ENCODE measurements at regions of chr9 and their contacts with region 1.

Region 1: DNA sequence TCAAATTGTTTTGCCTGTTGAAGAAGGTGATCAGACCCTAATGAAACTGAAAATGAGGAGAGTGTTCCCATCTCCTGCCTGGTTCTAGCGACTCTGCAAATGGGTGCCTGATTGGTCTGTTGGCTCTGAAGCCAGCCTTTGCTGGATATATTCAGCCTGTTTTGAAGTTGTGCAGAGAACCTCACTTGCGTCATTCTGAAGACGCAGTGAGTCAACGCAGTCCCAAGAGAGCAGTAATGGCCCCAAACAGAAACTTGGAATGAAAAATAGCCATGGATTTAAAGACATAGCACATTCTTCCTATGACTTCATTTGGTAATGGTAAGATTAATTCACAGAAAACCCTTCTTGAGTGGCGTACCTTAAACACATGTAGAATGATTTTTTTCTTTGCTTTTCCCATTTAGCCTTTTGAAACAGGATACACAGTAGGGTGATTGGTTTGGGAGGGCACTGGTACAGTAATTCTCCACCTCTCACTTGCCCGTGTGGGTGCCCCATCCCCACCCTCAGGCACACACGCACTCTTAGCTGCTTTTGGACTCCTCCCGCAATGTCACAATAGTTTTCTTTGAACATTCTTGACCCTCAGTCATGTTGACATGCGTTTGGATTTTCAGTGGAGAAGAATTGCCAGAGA is 54.1 kb upstream of the ABL1 start:
- DNase-seq: peak in 1 of 2 donors; percentile 95
- H3K4me3 ChIP-seq: peak overlapping the region; percentile 16 to 39
- H3K27ac ChIP-seq: peak overlapping the region; percentile 91
- H3K4me1 ChIP-seq: peaks cover 55% of the 10 kb centered on the region
- H3K27me3 ChIP-seq: no peaks in the 10 kb centered on the region
- CTCF ChIP-seq: no peak
- POLR2A ChIP-seq: peak; percentile 11 to 82

Region 2: GRCh38 chr9:130834371-130835311 is 53.7 kb after region 1 on chr9 and contains the start of gene ABL1:
- intact Hi-C with region 1: loop called (anchors 2 kb)
- DNase-seq: no peak
- H3K4me3 ChIP-seq: peak within 1 kb of the TSS; percentile 73 to 77
- H3K27ac ChIP-seq: peak within 1 kb of the TSS; percentile 91
- H3K4me1 ChIP-seq: peaks cover 63% of the 10 kb centered on the region
- H3K27me3 ChIP-seq: no peaks in the 10 kb centered on the region
- CTCF ChIP-seq: no peak
- POLR2A ChIP-seq: no peak
- total RNA-seq, gene ABL1: 68.5 TPM

Region 3: GRCh38 chr9:130847327-130848217 is 66.6 kb after region 1 on chr9:
- intact Hi-C with region 1: loop called (anchors 5 kb)
- DNase-seq: peak in 1 of 2 donors; percentile 100
- H3K4me3 ChIP-seq: no peak overlapping the region
- H3K27ac ChIP-seq: peak overlapping the region; percentile 94
- H3K4me1 ChIP-seq: peaks cover 74% of the 10 kb centered on the region
- H3K27me3 ChIP-seq: no peaks in the 10 kb centered on the region
- CTCF ChIP-seq: no peak
- POLR2A ChIP-seq: no peak

Measured in vagina (tissue), 2 donors.